Panc1 (cell line): ENCODE measurements at regions of chr3 and their contacts with region 1.

Region 1: GRCh38 chr3:160929595-160929994 is 173.6 kb downstream of the PPM1L start:
- DNase-seq: no peak
- ATAC-seq: peak; percentile 88
- H3K4me3 ChIP-seq: no peak overlapping the region
- H3K27ac ChIP-seq: no peak overlapping the region
- H3K4me1 ChIP-seq: peaks cover 4% of the 10 kb centered on the region; the same call in 1 of the 2 replicates
- H3K27me3 ChIP-seq: no peaks in the 10 kb centered on the region
- CTCF ChIP-seq: peak; percentile 8; the same call in 1 of the 2 replicates

Region 2: DNA sequence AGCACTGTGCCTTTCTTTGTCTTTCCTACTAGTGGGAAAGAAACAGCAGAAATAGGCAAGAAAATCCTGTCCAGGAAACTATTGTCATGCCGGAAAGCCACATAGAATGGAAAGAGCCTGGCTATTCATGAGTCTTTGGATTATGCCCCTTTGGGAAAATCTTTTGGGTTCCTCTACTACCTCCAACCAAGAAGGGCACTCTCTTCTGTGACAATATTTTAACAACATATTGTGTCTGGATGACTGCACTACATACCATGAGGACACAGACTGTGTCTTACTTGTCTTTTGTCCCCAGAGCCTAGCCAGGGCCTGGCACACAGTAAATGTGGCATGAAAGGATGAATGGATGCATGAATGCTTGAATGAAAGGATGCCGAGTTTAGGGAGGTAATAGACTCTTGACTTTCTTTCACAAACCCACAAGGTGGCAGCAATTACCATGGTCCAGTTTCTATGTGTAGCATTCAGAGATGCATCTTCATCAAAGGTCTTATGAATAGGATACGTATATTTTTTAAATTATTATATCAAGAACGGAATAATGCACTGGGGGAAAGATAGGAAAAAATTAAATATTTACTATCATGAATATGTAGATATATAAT is 222.3 kb before region 1 on chr3:
- CTCF ChIA-PET with region 1: no interaction called
- POLR2A ChIA-PET with region 1: no interaction called
- in situ Hi-C with region 1: no loop called
- intact Hi-C with region 1: loop called (anchors 5 kb)
- DNase-seq: peak; percentile 38
- ATAC-seq: peak; percentile 97
- H3K4me3 ChIP-seq: no peak overlapping the region
- H3K27ac ChIP-seq: peak overlapping the region; percentile 3; the same call in 1 of the 2 replicates
- H3K4me1 ChIP-seq: no peaks in the 10 kb centered on the region
- H3K27me3 ChIP-seq: no peaks in the 10 kb centered on the region; the same call in 1 of the 2 replicates
- CTCF ChIP-seq: peak; percentile 81

Region 3: DNA sequence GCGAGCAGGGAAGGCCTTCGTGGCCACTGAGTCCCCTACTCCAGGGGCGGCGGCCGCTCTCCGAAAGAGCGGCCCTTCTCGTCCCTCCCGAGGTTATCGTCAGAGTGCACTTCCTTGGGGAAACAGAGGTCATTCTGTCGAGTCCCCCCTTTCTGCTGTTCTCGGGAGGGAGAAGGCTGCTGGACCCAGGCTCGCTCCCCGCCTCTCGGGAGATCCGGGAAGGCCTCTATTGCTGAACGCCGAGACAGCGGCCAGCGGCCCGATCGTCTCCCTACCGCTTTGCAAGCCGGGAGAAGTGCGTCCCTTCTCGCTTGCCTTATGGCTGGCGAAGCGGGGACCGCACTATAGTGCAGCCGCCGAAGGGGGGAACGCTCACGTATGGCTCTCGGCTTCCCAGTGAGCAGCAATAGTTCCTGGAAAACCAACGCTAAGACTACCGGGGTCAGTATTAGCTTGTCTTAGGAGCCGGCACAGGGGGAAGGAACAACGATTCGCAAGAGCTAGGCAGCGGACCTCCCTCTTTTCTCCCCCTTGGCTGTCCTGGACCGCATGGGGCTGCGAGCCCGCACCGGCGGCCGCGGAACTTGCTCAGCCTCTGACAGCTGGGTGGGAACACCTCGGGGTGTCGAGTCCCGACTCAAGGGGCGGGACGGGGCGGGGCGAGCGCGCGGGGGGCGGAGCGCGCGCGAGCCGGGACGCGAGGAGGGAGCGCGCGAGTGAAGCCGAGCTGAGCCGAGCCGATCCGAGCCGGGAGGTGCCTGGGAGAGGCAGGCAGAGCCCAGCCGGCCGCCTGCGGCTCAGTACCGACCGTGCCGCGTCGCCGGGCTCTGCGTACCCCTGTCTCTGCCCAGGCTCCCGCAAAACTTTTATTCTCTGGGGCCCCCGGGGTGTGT is 174.5 kb before region 1 on chr3:
- CTCF ChIA-PET with region 1: no interaction called
- POLR2A ChIA-PET with region 1: no interaction called
- in situ Hi-C with region 1: no loop called
- intact Hi-C with region 1: loop called (anchors 10 kb)
- DNase-seq: peak; percentile 85
- ATAC-seq: peak; percentile 90
- H3K4me3 ChIP-seq: peak overlapping the region; percentile 84 to 93
- H3K27ac ChIP-seq: peak overlapping the region; percentile 95
- H3K4me1 ChIP-seq: peaks cover 28% of the 10 kb centered on the region
- H3K27me3 ChIP-seq: no peaks in the 10 kb centered on the region
- CTCF ChIP-seq: no peak